WTC11 (cell line): ENCODE measurements at regions of chr16 and their contacts with region 1.

Region 1: GRCh38 chr16:30041846-30042267 is 10.8 kb upstream of the TLCD3B start:
- DNase-seq: no peak
- ATAC-seq: no peak
- H3K4me3 Mint-ChIP-seq: no peak overlapping the region
- H3K27ac Mint-ChIP-seq: no peak overlapping the region
- H3K4me1 Mint-ChIP-seq: no peaks in the 10 kb centered on the region
- H3K27me3 Mint-ChIP-seq: peaks cover 32% of the 10 kb centered on the region
- CTCF ChIP-seq: no peak

Region 2: DNA sequence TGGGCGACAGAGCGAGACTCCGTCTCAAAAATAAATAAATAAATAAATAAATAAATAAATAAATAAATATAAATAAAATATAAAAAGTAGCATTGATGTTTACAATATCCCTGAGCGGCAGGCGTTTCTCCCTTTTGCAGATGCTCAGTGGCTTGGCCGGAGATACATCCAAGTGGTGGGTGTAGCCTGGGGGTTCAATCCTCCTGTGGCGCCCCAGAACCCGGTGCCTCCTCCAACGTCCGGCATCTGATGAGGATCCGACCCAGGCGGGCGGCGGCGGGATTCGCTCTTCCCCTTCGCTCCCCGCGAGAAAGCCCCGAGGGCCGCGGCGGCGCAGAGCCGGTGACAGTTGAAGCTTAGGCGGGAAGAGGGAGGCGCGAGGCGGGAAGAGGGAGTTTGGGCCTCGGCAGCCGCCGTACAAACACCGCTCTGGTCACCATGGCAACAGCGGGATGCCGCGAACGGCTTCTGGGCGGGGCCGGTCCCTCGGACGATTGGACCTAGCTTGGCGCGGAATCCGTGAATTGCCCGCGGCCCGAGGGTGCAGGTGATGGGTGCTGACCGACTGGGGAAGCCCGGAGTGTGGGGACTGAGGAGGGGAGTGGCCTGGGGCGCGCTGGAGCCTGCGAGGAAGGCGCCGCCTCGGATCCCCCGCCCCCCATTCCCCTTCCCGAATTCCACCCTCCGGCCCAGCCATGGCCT is 11.0 kb after region 1 on chr16:
- CTCF ChIA-PET with region 1: interaction called, 14 read pairs
- POLR2A ChIA-PET with region 1: interaction called, 3 read pairs
- DNase-seq: peak; percentile 94
- ATAC-seq: peak; percentile 60
- H3K4me3 Mint-ChIP-seq: peak overlapping the region; percentile 82
- H3K27ac Mint-ChIP-seq: no peak overlapping the region
- H3K4me1 Mint-ChIP-seq: peaks cover 14% of the 10 kb centered on the region
- H3K27me3 Mint-ChIP-seq: peaks cover 37% of the 10 kb centered on the region
- CTCF ChIP-seq: no peak

Region 3: GRCh38 chr16:30104494-30104968 is 62.7 kb after region 1 on chr16:
- CTCF ChIA-PET with region 1: no interaction called
- POLR2A ChIA-PET with region 1: no interaction called
- DNase-seq: no peak
- ATAC-seq: no peak
- H3K4me3 Mint-ChIP-seq: no peak overlapping the region
- H3K27ac Mint-ChIP-seq: no peak overlapping the region
- H3K4me1 Mint-ChIP-seq: no peaks in the 10 kb centered on the region
- H3K27me3 Mint-ChIP-seq: no peaks in the 10 kb centered on the region
- CTCF ChIP-seq: no peak